ENCODE measurements at regions of chr14 and their contacts with region 1.

Region 1: DNA sequence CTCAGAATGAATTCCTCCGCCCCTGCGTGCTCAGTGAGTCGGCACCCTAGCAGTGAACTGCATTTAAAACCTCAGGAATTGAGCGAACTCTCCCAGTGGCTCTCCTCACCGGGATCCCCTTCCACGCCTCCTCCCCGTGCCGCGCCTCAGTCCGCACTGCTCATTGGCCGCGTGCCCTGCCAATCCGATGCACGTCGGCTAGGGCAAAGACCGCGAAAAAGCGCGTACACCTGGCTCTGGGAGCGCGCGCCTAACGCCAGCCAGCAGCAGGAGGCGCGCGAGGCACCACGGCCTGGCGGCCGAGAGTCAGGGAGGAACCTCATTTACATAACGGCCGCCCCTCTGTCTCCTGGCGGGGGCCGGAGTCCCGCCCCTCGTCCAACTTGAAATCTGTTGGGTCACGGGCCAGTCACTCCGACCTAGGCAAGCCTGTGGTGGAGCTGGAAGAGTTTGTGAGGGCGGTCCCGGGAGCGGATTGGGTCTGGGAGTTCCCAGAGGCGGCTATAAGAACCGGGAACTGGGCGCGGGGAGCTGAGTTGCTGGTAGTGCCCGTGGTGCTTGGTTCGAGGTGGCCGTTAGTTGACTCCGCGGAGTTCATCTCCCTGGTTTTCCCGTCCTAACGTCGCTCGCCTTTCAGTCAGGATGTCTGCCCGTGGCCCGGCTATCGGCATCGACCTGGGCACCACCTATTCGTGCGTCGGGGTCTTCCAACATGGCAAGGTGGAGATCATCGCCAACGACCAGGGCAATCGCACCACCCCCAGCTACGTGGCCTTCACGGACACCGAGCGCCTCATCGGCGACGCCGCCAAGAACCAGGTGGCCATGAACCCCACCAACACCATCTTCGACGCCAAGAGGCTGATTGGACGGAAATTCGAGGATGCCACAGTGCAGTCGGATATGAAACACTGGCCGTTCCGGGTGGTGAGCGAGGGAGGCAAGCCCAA is at the start of gene HSPA2:
- DNase-seq: peak; percentile 100
- H3K4me3 ChIP-seq: peak within 1 kb of the TSS; percentile 50 to 63 (median 58)
- H3K27ac ChIP-seq: peak within 1 kb of the TSS; percentile 88 to 95 (median 92)
- H3K4me1 ChIP-seq: peaks cover 0 to 26% (median 6%) of the 10 kb centered on the region in 4 donors
- H3K27me3 ChIP-seq: no peaks in the 10 kb centered on the region
- CTCF ChIP-seq: peak; percentile 72 to 83 (median 78)
- EP300 ChIP-seq: no peak
- POLR2A ChIP-seq: peak; percentile 95 to 96
- total RNA-seq, gene HSPA2: 80.3 to 172 (median 102) TPM

Region 2: GRCh38 chr14:64126548-64126947 is 413.9 kb before region 1 on chr14:
- intact Hi-C with region 1: no loop called
- DNase-seq: no peak
- H3K4me3 ChIP-seq: no peak overlapping the region
- H3K27ac ChIP-seq: no peak overlapping the region
- H3K4me1 ChIP-seq: no peaks in the 10 kb centered on the region
- H3K27me3 ChIP-seq: no peaks in the 10 kb centered on the region
- CTCF ChIP-seq: no peak
- EP300 ChIP-seq: no peak
- POLR2A ChIP-seq: no peak

Region 3: DNA sequence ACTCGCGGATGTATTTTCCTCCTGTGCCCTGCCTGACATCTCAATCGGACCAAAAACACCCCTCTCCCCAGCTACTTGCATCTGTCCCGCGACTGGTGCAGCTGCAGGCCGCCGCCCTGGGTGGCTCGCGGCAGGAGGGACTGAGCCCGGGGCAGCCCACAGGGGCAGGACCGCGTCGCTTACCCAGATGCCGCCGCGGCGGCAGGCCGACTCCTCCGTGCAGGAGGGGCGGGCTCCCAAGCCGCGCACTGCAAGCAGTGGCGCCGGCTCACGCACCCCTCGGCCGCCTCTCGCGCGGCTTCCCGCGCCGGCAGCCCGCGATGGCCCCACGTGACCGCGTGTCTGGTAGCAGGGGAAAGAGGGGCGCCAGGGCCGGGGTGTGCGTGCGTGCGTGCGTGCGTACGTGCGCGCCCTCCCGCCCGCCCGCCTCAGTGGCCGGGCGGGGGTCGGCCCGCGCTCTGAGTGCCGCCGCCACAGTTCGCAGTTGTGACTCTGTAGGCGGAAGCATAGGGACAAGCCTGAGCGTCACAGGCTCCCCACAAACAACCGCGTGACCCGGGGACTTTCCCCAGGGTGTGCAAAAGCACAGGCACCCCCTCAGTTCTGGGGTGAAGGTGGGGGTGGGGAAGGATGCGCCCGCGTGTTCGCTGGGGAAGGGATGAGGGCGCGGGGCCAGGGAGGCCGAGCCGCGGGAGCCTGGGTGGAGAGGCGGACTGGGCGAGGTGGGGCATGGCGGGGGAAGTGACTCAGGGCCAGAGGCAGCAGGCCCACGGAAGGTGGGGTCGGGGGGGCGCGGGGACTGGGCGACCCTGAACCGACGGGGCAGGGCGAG is 36.8 kb before region 1 on chr14 and contains the start of gene ZBTB25:
- intact Hi-C with region 1: loop called (anchors 1 kb)
- DNase-seq: peak; percentile 96
- H3K4me3 ChIP-seq: peak within 1 kb of the TSS; percentile 71 to 88 (median 78)
- H3K27ac ChIP-seq: peak within 1 kb of the TSS; percentile 99 to 100 (median 99)
- H3K4me1 ChIP-seq: peaks cover 0 to 57% (median 54%) of the 10 kb centered on the region in 4 donors
- H3K27me3 ChIP-seq: no peaks in the 10 kb centered on the region
- CTCF ChIP-seq: no peak
- EP300 ChIP-seq: peak in 1 of 4 donors; percentile 31
- POLR2A ChIP-seq: peak; percentile 86 to 92
- total RNA-seq, gene ZBTB25: 9.6 to 24.6 (median 11.8) TPM

Region 4: GRCh38 chr14:64628940-64629408 is 88.5 kb after region 1 on chr14:
- intact Hi-C with region 1: loop called (anchors 2 kb)
- DNase-seq: peak; percentile 87
- H3K4me3 ChIP-seq: no peak overlapping the region
- H3K27ac ChIP-seq: peak overlapping the region; percentile 76 to 88 (median 84)
- H3K4me1 ChIP-seq: peaks cover 0 to 63% (median 49%) of the 10 kb centered on the region in 4 donors
- H3K27me3 ChIP-seq: no peaks in the 10 kb centered on the region
- CTCF ChIP-seq: no peak
- EP300 ChIP-seq: peak in 2 of 4 donors; percentile 59 to 82
- POLR2A ChIP-seq: no peak

Region 5: DNA sequence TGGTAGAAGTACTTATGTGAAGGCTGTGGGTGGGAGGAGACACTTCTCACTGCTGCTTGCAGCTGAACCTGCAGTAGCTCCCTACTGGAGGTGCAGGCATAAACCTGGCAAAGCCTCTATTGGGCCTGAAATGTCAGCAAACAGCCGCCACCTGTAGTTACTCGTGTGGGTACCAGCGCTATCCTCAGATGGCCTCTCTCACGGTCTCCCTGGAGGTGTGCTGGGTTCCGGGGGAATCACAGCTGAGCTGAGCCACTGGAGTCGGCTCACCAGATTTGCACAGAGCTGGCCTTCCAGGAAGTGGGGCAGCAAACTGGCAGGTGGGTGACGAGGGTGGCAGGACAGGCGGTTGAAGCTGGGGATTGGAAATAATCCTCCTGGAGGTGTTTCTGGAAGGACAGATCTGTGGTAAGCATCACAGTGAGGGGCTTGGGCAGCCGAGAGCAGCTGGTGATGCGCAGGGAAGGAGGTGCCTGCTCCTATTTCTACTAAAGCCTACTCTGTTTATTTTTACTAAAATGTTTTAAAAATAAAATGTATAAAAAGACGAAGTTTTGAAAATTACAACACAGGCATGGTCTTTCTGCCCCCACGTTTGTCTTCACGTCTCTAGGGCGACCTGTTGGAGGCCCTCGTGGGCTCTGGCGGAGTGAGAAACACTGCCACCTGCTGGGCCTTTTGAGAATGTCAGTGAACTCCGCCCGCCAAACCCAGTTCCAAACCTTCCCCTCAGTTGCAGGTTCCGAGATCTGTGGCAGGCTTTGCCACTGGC is 95.9 kb after region 1 on chr14:
- intact Hi-C with region 1: loop called (anchors 1 kb)
- DNase-seq: peak; percentile 87
- H3K4me3 ChIP-seq: no peak overlapping the region
- H3K27ac ChIP-seq: peak overlapping the region in 3 of 4 donors; percentile 20 to 51 (median 33)
- H3K4me1 ChIP-seq: peaks cover 0 to 27% (median 11%) of the 10 kb centered on the region in 4 donors
- H3K27me3 ChIP-seq: no peaks in the 10 kb centered on the region
- CTCF ChIP-seq: peak; percentile 83 to 94 (median 90)
- EP300 ChIP-seq: no peak
- POLR2A ChIP-seq: no peak

Region 6: GRCh38 chr14:64764641-64765520 is 224.4 kb after region 1 on chr14:
- intact Hi-C with region 1: loop called (anchors 1 kb)
- DNase-seq: peak; percentile 85
- H3K4me3 ChIP-seq: peak overlapping the region in 3 of 4 donors; percentile 30 to 42 (median 34)
- H3K27ac ChIP-seq: peak overlapping the region in 3 of 4 donors; percentile 67 to 86 (median 78)
- H3K4me1 ChIP-seq: peaks cover 0 to 52% (median 44%) of the 10 kb centered on the region in 4 donors
- H3K27me3 ChIP-seq: no peaks in the 10 kb centered on the region
- CTCF ChIP-seq: peak; percentile 92 to 96 (median 94)
- EP300 ChIP-seq: no peak
- POLR2A ChIP-seq: no peak

Measured in sigmoid colon (tissue), 7 donors.